BJ (cell line): ENCODE measurements at regions of chr6 and their contacts with region 1.

Region 1: DNA sequence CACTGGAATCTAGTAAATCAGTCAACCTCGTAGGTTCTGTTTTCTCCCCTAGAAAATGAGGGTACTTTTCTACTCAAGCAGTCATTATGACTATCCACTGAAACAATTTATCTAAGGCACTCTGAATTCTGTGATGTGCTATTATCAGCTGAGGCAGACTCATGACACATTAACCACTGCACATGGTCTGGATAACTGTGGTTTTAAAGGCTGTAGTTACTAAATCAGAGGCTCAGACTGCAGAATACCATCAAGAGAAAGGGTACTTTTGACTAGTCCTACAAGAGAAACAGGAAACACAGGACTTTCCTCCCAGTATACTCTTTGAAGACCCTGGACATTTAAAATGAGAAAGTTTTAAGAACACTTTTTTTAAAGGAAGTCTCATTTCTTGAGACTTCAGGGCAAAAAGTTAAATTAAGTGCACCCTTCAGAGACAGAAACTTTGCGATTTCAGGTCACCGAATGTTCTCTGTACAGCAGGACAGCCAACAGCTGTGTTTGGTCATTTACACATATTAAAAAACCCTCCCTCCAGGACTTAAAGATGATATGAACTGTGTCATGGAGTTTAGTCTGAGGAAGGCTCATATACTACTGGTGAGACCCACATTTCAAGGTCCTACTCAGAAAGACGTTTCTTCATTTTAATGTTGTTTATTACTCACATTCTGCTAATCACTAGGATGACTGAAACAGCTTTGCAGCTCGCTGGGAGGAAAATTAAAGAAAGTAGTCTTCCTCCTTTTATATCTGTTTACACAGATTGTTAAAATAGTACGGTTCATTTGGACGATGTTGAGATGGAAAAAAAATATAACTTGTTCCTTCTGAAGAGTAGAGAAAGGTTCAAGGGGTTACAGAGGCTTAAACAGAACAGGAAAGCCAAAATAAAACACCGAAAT is 19.9 kb downstream of the ATXN1 start:
- DNase-seq: peak; percentile 95
- H3K4me3 ChIP-seq: no peak overlapping the region
- H3K27me3 ChIP-seq: no peaks in the 10 kb centered on the region
- CTCF ChIP-seq: no peak

Region 2: GRCh38 chr6:16544006-16544405 is 197.4 kb before region 1 on chr6:
- CTCF ChIA-PET with region 1: no interaction called
- POLR2A ChIA-PET with region 1: interaction called, 26 read pairs
- DNase-seq: peak; percentile 82
- H3K4me3 ChIP-seq: no peak overlapping the region
- H3K27me3 ChIP-seq: no peaks in the 10 kb centered on the region
- CTCF ChIP-seq: no peak

Region 3: GRCh38 chr6:16576451-16577368 is 164.7 kb before region 1 on chr6:
- CTCF ChIA-PET with region 1: no interaction called
- POLR2A ChIA-PET with region 1: no interaction called
- DNase-seq: no peak
- H3K4me3 ChIP-seq: no peak overlapping the region
- H3K27me3 ChIP-seq: no peaks in the 10 kb centered on the region
- CTCF ChIP-seq: no peak

Region 4: DNA sequence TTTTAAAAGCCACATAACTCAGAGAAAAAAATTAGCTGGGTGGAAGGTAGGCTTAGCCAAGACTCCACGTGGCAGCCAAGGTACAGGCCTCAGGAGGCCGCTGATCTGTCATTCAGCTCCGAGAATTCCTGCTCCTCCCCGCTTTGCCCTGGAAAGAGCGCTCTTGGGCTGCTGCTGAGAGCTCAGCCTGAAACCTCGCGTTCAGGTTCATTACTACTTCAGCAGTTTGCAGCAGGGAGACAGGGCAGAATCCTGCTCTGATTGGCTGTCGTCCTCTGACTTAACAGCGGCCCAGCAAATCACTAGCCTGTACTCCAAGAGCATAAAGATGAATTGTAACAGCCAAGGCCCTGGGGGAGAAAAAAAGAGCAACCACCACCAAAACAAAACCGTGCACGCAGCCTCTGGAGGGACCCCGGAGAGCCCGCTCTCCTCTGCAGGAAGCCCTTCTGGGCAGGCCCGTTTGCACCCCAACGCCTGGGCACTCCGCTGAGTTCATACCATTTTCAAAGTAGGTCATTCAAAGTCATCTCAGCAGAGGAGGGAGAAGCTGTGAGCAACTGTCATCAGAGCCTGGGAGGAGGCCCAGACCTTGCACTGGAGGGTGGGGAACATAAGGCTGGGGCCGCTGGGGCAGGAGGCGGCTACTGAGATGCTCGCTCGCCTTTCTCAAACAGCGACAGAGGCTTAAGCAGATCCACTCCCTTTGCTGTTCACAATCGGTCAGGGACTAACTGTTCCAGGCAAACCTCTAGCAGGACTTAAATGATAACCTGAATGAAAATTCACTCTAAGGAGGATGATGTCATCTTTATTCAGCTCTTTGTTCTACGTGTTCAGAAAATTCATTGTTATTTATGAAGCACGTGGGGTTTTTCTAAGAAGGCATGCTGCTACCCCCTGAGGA is 62.2 kb after region 1 on chr6:
- CTCF ChIA-PET with region 1: no interaction called
- POLR2A ChIA-PET with region 1: no interaction called
- DNase-seq: no peak
- H3K4me3 ChIP-seq: no peak overlapping the region
- H3K27me3 ChIP-seq: no peaks in the 10 kb centered on the region; the same call in 1 of the 2 replicates
- CTCF ChIP-seq: no peak